ENCODE measurements at regions of chr4 and their contacts with region 1.

Region 1: DNA sequence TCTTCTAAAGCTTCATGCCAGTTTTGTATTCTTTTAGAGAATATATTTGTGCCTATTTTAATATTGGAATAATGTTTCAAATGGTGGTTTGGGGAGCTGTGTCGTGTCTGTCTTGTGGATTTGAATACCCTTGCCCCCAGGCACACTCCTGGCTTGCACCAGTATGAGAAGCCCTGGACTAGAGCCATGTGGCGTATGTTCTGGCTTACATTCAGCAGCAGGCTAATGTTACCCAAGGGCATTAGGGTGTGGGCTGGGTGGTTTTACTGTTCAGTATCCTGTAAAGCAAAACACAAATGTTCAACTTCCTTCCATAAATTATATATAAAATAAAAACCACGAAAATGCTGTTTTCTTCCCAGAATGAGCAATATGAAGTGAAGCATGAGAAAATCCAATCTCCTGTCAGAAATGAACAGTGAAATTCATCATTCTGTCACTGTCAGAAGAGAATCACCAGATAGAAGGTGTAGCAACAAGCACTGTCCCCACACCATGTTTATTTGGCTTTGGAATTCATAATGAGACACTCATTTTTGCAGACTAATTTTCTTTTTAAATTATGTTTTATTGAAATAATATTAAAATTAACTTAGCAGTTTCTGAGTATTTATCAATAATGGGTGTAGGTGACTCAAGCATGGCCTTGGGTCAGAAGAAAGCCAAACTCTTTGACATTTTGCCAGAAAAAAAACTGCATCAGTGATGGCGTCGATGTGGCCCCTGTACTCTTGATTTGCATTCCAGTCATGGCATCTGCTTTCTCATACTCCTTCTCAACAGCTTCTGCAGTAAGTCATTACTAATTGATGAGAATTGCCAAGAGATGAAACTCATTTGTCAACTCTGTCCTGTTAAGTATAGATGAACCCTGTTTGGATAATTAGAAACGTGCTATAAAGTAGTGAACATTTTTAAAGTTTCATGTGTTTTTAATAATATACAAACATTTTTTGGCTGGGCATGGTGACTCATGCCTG is 43.8 kb downstream of the WWC2 start:
- DNase-seq: peak; percentile 30
- H3K4me3 Mint-ChIP-seq: no peak overlapping the region
- H3K27ac Mint-ChIP-seq: no peak overlapping the region
- H3K4me1 Mint-ChIP-seq: peaks cover 20% of the 10 kb centered on the region
- H3K27me3 Mint-ChIP-seq: no peaks in the 10 kb centered on the region
- CTCF ChIP-seq: no peak

Region 2: GRCh38 chr4:183106839-183107238 is 36.0 kb before region 1 on chr4:
- CTCF ChIA-PET with region 1: no interaction called
- intact Hi-C with region 1: loop called (anchors 5 kb)
- DNase-seq: no peak
- H3K4me3 Mint-ChIP-seq: no peak overlapping the region
- H3K27ac Mint-ChIP-seq: no peak overlapping the region
- H3K4me1 Mint-ChIP-seq: peaks cover 33% of the 10 kb centered on the region
- H3K27me3 Mint-ChIP-seq: no peaks in the 10 kb centered on the region
- CTCF ChIP-seq: no peak

Measured in Calu3 (cell line).